Left colon (tissue), 2 donors: ENCODE measurements at regions of chr6 and their contacts with region 1.

Region 1: GRCh38 chr6:37169496-37170272 is at the start of gene PIM1:
- DNase-seq: peak; percentile 99
- ATAC-seq: peak; percentile 83
- total RNA-seq, gene PIM1: 27.1 to 37.0 TPM

Region 2: GRCh38 chr6:37048851-37049757 is 120.6 kb before region 1 on chr6:
- intact Hi-C with region 1: loop called in 1 of 2 experiments (anchors 5 kb)
- DNase-seq: peak; percentile 52 to 61
- ATAC-seq: no peak

Region 3: DNA sequence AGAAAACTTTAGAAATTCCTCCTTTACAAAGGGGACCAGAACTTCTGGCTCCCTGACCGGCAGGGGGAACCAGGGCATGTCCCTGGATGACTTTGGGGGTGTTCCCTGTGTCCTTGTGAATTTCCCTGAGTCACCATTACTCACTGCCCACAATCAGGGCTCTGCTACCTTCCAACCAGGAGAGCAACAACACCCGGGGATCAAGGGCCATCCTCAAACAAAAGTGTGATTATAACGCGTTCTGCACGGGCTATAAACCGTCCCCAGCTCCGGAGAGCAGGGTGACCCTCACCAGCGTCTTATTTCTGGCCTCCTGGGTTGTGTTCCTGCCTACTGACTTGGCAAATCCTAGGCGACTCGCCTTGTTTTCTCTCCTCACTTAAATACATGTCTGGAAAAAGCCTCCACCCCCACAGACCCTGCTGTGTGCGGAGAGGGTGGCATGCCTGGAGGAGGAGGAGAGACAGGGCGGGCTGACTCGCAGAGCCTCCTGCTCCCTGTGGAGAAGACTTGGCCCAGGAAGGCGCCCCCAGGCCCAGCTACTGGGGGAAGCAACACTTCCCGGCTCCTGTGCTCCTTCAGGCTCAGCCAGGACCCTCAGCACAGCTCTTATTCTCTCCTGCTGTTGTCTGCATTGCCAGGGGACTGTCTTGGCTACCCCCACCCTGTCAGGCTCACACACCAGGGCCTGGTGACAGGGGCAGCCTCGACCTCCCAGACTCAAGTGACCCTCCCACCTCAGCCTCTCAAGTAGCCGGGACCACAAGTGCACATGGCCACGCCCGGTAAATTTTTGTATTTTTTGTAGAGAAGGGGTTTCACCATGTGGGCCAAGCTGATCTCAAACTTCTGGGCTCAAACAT is 110.1 kb before region 1 on chr6:
- intact Hi-C with region 1: loop called in 1 of 2 experiments (anchors 5 kb)
- DNase-seq: peak; percentile 66 to 67
- ATAC-seq: peak; percentile 94